Common myeloid progenitor, CD34-positive (primary cell): ENCODE measurements at regions of chr1 and their contacts with region 1.

Region 1: GRCh38 chr1:17423781-17424245 is 15.7 kb downstream of the RCC2 start:
- DNase-seq: no peak
- H3K4me3 ChIP-seq: no peak overlapping the region
- H3K27ac ChIP-seq: no peak overlapping the region
- H3K4me1 ChIP-seq: peaks cover 0 to 2% (median 0%) of the 10 kb centered on the region in 4 experiments
- H3K27me3 ChIP-seq: no peaks in the 10 kb centered on the region

Region 2: GRCh38 chr1:17439250-17440073 is 15.6 kb after region 1 on chr1 and contains the start of gene RCC2:
- CTCF ChIA-PET with region 1: interaction called, 12 read pairs
- POLR2A ChIA-PET with region 1: interaction called, 3 read pairs
- DNase-seq: peak; percentile 76 to 89 (median 83)
- H3K4me3 ChIP-seq: peak within 1 kb of the TSS; percentile 77 to 97 (median 87)
- H3K27ac ChIP-seq: peak within 1 kb of the TSS; percentile 91 to 93
- H3K4me1 ChIP-seq: peaks cover 2 to 44% (median 43%) of the 10 kb centered on the region in 4 experiments
- H3K27me3 ChIP-seq: no peaks in the 10 kb centered on the region